ENCODE measurements at regions of chr5 and their contacts with region 1.

Region 1: GRCh38 chr5:176537608-176538504 is 654 bp upstream of the RNF44 start:
- DNase-seq: peak; percentile 100
- H3K4me3 ChIP-seq: peak overlapping the region; percentile 83 to 87
- H3K27ac ChIP-seq: peak overlapping the region; percentile 92
- H3K4me1 ChIP-seq: peaks cover 3 to 51% (median 40%) of the 10 kb centered on the region in 4 donors
- H3K27me3 ChIP-seq: no peaks in the 10 kb centered on the region
- CTCF ChIP-seq: no peak

Region 2: DNA sequence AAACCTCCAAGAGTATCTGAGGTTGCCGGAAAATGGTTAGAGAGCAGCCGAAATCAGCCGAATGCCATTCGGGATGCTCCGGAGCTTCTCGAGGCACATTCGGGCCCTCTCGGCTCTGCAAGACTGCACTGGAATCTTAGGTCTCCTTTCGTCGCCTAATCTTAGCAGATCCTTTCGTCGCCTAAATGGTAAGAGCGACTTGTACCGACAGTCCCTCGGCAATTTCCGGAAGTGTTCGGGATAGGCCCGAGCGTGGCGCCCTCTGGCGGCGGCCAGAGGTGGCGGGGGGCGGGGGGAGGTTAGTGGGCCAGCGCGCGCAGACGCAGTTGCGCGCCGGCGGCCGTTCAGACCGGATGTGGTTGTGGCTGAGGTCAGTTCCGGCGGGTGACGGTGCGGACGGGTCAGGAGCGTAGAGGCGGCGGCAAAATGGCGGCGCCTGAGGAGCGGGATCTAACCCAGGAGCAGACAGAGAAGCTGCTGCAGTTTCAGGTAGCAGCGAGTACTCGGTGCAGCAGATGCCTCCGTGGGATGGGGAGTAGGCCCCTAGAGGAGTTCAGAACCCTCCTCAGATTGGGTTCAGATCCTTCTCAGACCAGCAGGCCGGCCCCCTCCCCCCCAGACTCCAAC is 89.8 kb before region 1 on chr5 and contains the start of gene FAF2:
- intact Hi-C with region 1: loop called (anchors 5 kb)
- DNase-seq: peak; percentile 96 to 98
- H3K4me3 ChIP-seq: peak within 1 kb of the TSS; percentile 69 to 89
- H3K27ac ChIP-seq: peak within 1 kb of the TSS; percentile 94 to 95
- H3K4me1 ChIP-seq: peaks cover 0 to 46% (median 19%) of the 10 kb centered on the region in 4 donors
- H3K27me3 ChIP-seq: no peaks in the 10 kb centered on the region
- CTCF ChIP-seq: peak; percentile 97 to 99

Region 3: GRCh38 chr5:176647030-176647866 is 109.4 kb after region 1 on chr5 and contains the start of gene TSPAN17:
- intact Hi-C with region 1: loop called (anchors 5 kb)
- DNase-seq: peak; percentile 100
- H3K4me3 ChIP-seq: peak within 1 kb of the TSS; percentile 66 to 74
- H3K27ac ChIP-seq: peak within 1 kb of the TSS; percentile 70 to 84
- H3K4me1 ChIP-seq: peaks cover 0 to 29% (median 17%) of the 10 kb centered on the region in 4 donors
- H3K27me3 ChIP-seq: no peaks in the 10 kb centered on the region
- CTCF ChIP-seq: peak in 1 of 2 experiments; percentile 23

Measured in tibial artery (tissue), 4 donors.